ENCODE measurements at regions of chr11 and their contacts with region 1.

Region 1: GRCh38 chr11:35617687-35618496 is at the start of gene FJX1:
- DNase-seq: peak in 40 of 42 donors; percentile 12 to 78 (median 48)

Region 2: DNA sequence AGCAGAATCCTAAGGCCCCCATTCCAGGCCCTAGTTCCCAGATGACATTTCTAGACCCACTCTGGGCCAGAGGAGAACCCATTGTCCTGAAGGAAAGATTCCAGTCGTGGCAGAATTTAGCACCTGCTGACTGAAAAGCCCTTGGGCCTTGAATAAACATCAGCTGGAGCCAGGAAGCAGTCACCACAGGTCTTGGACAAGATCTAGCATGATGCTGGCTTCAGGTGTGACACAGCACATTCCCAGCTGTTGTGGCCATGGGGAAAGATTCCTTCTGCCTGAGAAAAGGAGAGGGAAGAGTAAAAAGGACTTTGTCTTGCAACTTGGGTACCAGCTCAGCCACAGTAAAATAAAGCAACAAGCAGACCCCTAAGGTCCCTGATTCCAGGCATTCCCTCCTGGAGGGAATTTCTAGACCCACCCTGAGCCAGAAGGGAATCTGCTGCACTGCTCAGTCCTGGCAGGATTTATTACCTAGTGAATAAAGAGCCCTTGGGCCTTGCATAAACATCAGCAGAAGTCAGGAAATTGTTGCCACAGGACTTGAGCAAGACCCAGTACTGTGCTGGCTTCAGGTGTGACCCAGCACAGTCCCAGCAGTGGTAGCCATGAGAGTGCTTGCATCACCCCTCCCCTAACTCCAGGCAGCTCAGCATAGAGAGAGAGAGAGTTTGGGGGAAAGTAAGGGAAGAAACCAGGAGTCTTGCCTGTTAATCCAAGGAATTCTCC is 50.0 kb before region 1 on chr11:
- intact Hi-C with region 1: no loop called
- DNase-seq: no peak

Region 3: GRCh38 chr11:35662649-35663407 is 44.9 kb after region 1 on chr11 and contains the start of gene TRIM44:
- intact Hi-C with region 1: loop called (anchors 2 kb)
- DNase-seq: peak; percentile 20 to 95 (median 88)

Region 4: GRCh38 chr11:35822815-35823495 is 205.1 kb after region 1 on chr11:
- intact Hi-C with region 1: loop called (anchors 5 kb)
- DNase-seq: no peak

Region 5: DNA sequence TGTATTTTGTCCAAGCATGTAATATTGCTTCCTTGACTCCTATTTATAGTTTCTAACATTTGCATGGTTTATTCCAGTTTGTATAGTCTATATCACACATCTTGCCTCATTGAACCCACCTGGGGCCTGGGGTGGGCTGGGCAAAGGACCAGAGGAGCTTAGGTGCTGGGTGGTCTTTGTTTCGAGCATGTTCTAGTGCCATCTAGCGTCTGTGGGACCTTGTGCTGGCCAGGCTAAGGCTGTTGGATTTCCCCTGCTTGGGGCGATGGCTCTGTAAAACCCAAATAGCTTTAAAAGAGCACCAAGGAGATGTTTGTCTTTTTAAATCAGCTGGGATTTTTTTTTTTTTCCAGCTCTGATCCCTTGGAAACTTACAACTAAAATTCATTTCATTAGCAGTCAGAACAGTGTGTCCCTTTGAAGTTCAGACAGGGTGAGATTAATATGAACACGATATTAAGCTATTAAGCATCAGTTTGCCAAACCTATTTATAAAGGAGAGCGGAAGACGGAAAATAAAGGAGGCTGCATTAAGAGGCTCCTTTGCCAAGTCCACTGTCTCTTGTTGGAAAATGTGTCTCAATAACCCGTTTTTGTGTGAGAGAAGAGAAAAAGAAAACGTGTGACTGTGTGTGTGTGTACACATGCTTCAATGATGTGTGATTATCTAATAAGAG is 514.0 kb after region 1 on chr11:
- intact Hi-C with region 1: loop called (anchors 5 kb)
- DNase-seq: peak in 41 of 42 donors; percentile 42 to 88 (median 69)

Region 6: GRCh38 chr11:36265793-36266628 is 648.1 kb after region 1 on chr11:
- intact Hi-C with region 1: loop called (anchors 5 kb)
- DNase-seq: peak in 35 of 42 donors; percentile 22 to 84 (median 55)

Region 7: GRCh38 chr11:36478700-36479329 is 860.9 kb after region 1 on chr11:
- intact Hi-C with region 1: loop called (anchors 10 kb)
- DNase-seq: peak in 32 of 42 donors; percentile 27 to 84 (median 64)

Measured in head of caudate nucleus (tissue), 42 donors.